AG04449 (cell line): ENCODE measurements at regions of chr3 and their contacts with region 1.

Region 1: GRCh38 chr3:11803977-11804892 is 42.5 kb downstream of the TAMM41 start:
- DNase-seq: no peak
- H3K4me3 ChIP-seq: no peak overlapping the region
- CTCF ChIP-seq: peak; percentile 67

Region 2: GRCh38 chr3:11818033-11818432 is 13.8 kb after region 1 on chr3:
- CTCF ChIA-PET with region 1: interaction called, 50 read pairs
- POLR2A ChIA-PET with region 1: no interaction called
- DNase-seq: no peak
- H3K4me3 ChIP-seq: no peak overlapping the region
- CTCF ChIP-seq: no peak

Region 3: GRCh38 chr3:11826628-11827265 is 22.5 kb after region 1 on chr3:
- CTCF ChIA-PET with region 1: interaction called, 23 read pairs
- POLR2A ChIA-PET with region 1: no interaction called
- DNase-seq: peak; percentile 57
- H3K4me3 ChIP-seq: no peak overlapping the region
- CTCF ChIP-seq: no peak